H1 (cell line): ENCODE measurements at regions of chr4 and their contacts with region 1.

Region 1: GRCh38 chr4:92257931-92258857 is 45.6 kb upstream of the GRID2 start:
- DNase-seq: no peak
- H3K4me3 ChIP-seq: no peak overlapping the region
- H3K27ac ChIP-seq: no peak overlapping the region
- H3K4me1 ChIP-seq: no peaks in the 10 kb centered on the region
- H3K27me3 ChIP-seq: peaks cover 0 to 2% (median 0%) of the 10 kb centered on the region in 4 experiments; a peak in 2 of 7 replicates
- CTCF ChIP-seq: no peak
- EP300 ChIP-seq: no peak
- POLR2A ChIP-seq: peak in 1 of 2 experiments; percentile 88; a peak in 2 of 3 replicates
- RAD21 ChIP-seq: no peak

Region 2: DNA sequence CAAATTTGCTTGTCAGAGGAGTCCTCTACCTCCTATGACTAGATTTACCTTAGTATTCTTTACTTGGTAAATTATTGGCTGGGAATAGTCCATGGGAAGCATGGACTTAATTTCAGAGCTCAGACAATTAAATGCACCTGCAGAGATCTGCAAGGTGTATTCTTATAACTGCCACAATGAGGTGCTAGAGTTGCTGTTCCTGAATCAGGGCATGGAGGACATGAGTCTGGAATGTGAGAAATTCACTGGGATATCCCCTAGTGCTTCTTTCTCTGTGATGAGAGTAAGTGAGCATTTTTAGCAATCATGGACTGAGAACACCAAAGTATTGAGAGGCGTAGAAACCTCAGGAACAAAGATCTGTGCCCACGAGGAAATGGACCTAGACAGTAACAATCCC is 12.7 kb after region 1 on chr4:
- CTCF ChIA-PET with region 1: no interaction called
- POLR2A ChIA-PET with region 1: interaction called, 20 read pairs
- DNase-seq: no peak
- H3K4me3 ChIP-seq: peak overlapping the region; percentile 12 to 56 (median 24); a peak in 7 of 8 replicates
- H3K27ac ChIP-seq: peak overlapping the region; percentile 64; the same call in 1 of the 2 replicates
- H3K4me1 ChIP-seq: no peaks in the 10 kb centered on the region; a peak in 2 of 7 replicates
- H3K27me3 ChIP-seq: no peaks in the 10 kb centered on the region
- CTCF ChIP-seq: peak in 2 of 3 experiments; percentile 57 to 73; a peak in 3 of 4 replicates
- EP300 ChIP-seq: no peak
- POLR2A ChIP-seq: no peak; a peak in 1 of 3 replicates
- RAD21 ChIP-seq: peak; percentile 76 to 82

Region 3: DNA sequence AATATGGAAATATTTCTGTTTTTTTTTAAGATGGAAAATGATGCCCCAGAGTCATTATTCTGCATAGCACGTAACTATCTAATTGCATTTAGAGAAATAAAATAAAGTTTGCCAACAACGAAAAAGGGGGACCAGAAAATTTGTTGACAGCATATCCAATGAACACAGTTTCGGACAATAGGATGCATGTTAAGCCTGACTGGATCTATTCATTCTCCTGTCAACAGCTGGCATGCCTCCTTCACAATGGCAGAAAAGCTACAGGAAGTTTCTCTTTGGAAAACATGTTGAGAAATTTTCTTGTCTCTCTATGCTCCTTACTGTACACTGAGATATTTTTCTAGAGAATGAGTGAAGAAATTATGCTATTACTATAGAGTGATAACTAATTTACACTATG is 308.1 kb after region 1 on chr4:
- CTCF ChIA-PET with region 1: no interaction called
- POLR2A ChIA-PET with region 1: no interaction called
- DNase-seq: no peak
- H3K4me3 ChIP-seq: no peak overlapping the region
- H3K27ac ChIP-seq: no peak overlapping the region
- H3K4me1 ChIP-seq: no peaks in the 10 kb centered on the region
- H3K27me3 ChIP-seq: no peaks in the 10 kb centered on the region
- CTCF ChIP-seq: no peak
- EP300 ChIP-seq: no peak
- POLR2A ChIP-seq: no peak
- RAD21 ChIP-seq: no peak